Activated naive CD4-positive, alpha-beta T cell treated with anti-CD3 and anti-CD28 coated beads for 36 hours (primary cell): ENCODE measurements at regions of chr10 and their contacts with region 1.

Region 1: DNA sequence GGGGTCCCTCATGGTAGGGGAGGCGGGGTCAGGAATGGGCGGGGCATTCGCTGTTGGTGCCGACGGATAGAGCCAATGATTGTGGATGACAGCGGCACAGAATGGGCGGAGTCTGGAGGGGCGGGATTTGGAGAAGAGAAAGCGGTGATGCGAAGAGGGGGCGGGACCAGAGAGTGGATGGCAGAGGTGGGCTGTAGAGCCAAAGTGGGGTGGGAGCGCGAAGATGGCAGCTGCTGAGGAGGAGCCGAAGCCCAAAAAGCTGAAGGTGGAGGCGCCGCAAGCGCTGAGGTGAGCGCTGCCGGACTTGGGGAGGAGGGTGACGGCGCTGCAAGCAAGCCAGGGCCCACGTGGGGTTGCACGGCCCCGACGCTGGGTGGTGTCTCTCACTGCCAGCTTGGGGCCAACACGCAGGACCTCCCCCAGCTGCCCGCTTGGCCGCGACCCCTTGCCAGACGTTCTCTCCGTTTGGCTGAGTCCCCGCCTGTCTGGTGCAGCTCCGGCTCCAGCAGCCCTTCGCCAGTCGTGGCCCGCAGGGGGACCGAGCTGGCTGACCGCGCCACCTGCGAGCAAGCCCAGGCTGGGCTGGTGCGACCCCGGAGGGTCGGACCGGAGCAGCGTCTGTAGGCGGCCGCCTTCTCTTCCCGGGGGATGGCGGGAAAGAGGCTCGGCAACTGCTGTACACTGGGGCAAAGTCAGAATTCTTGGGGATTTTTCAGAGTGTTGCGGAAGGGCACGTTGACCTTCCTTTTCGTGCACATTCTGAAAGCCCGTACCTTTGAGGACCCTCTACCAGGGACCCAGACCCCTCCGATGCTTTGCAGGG is at the start of gene ADK:
- DNase-seq: peak; percentile 100
- H3K4me3 Mint-ChIP-seq: no peak within 1 kb of the TSS
- H3K27ac Mint-ChIP-seq: peak within 1 kb of the TSS; percentile 33
- H3K4me1 Mint-ChIP-seq: peaks cover 31% of the 10 kb centered on the region
- H3K27me3 Mint-ChIP-seq: no peaks in the 10 kb centered on the region
- total RNA-seq, gene ADK: 43.4 to 43.9 TPM

Region 2: GRCh38 chr10:73997787-73998622 is 153.3 kb before region 1 on chr10 and contains the start of gene VCL:
- CTCF ChIA-PET with region 1: no interaction called
- intact Hi-C with region 1: loop called (anchors 2 kb)
- DNase-seq: peak; percentile 96
- H3K4me3 Mint-ChIP-seq: peak within 1 kb of the TSS; percentile 86
- H3K27ac Mint-ChIP-seq: peak within 1 kb of the TSS; percentile 89
- H3K4me1 Mint-ChIP-seq: peaks cover 26% of the 10 kb centered on the region
- H3K27me3 Mint-ChIP-seq: no peaks in the 10 kb centered on the region
- total RNA-seq, gene VCL: 13.4 to 14.4 TPM

Region 3: GRCh38 chr10:74189999-74190421 is 38.7 kb after region 1 on chr10:
- CTCF ChIA-PET with region 1: no interaction called
- intact Hi-C with region 1: loop called (anchors 1 kb)
- DNase-seq: peak; percentile 49
- H3K4me3 Mint-ChIP-seq: peak overlapping the region; percentile 58
- H3K27ac Mint-ChIP-seq: peak overlapping the region; percentile 88
- H3K4me1 Mint-ChIP-seq: peaks cover 57% of the 10 kb centered on the region
- H3K27me3 Mint-ChIP-seq: no peaks in the 10 kb centered on the region

Region 4: DNA sequence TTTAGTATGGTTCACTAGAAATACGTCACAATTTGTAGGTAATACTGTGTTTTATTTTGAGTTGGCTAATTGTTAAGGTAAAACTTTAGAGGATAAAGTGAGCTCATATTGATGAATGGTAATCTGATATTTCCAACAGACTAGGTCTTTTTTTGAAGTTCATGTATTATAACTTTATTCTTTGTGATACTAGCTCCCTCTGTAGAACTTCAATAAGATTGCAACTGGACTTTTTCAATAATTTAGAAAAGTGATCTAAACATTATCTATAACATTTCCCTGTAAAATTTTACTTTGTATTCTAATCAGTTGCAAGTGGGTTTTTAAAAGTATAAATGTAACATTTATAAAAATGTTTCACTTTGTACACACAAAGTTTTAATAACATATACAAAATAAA is 83.3 kb after region 1 on chr10:
- CTCF ChIA-PET with region 1: no interaction called
- intact Hi-C with region 1: loop called (anchors 1 kb)
- DNase-seq: no peak
- H3K4me3 Mint-ChIP-seq: no peak overlapping the region
- H3K27ac Mint-ChIP-seq: no peak overlapping the region
- H3K4me1 Mint-ChIP-seq: no peaks in the 10 kb centered on the region
- H3K27me3 Mint-ChIP-seq: no peaks in the 10 kb centered on the region

Region 5: GRCh38 chr10:74593470-74593869 is 442.2 kb after region 1 on chr10:
- CTCF ChIA-PET with region 1: no interaction called
- intact Hi-C with region 1: no loop called
- DNase-seq: no peak
- H3K4me3 Mint-ChIP-seq: no peak overlapping the region
- H3K27ac Mint-ChIP-seq: no peak overlapping the region
- H3K4me1 Mint-ChIP-seq: peaks cover 26% of the 10 kb centered on the region
- H3K27me3 Mint-ChIP-seq: no peaks in the 10 kb centered on the region